ENCODE measurements at regions of chr15 and their contacts with region 1.

Region 1: DNA sequence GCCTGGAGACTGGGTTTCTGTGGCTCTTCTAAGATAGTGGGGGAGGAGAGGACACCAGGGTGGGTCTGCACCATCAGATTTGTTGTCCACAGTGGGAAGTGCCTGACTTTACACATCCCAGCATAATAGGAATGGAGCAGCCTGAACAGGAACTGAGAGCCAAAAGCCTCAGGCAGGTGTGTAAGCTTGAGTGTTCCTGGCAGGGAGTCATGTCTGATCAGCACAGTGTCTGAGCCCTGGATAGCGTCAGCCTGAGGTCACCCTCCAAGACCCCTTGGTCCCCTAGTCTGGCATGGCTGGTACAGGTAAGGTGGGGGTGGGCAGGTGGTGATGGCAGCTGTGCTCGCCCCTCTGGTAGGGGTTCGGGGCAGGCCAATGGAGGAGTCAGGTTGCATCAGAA is 20.2 kb downstream of the INSYN1 start:
- DNase-seq: no peak
- ATAC-seq: no peak

Region 2: DNA sequence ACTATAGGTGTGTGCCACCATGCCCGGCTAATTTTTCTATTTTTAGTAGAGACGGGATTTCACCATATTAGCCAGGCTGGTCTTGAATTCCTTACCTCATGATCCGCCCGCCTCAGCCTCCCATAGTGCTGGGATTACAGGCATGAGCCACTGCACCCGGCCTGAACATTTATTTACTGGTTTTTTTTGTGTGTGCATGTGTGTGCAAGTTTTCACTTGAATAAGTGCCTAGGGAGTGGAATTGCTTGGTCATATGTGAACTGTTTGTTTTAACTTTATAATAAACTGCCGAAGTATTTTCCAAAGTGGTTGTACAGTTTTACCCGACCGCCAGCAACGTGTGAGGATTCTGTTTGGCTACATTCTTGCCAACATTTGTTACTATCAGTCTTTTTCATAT is 1032.9 kb before region 1 on chr15:
- intact Hi-C with region 1: no loop called
- DNase-seq: no peak
- ATAC-seq: no peak

Region 3: GRCh38 chr15:73851689-73852088 is 118.8 kb after region 1 on chr15:
- intact Hi-C with region 1: loop called (anchors 10 kb)
- DNase-seq: no peak
- ATAC-seq: no peak